Left ventricle myocardium inferior (tissue), 1 donor: ENCODE measurements at regions of chr2 and their contacts with region 1.

Region 1: GRCh38 chr2:65382776-65383357 is 49.5 kb downstream of the SPRED2 start:
- DNase-seq: peak; percentile 77
- H3K4me3 ChIP-seq: peak overlapping the region; percentile 49
- H3K27ac ChIP-seq: peak overlapping the region; percentile 85
- H3K4me1 ChIP-seq: peaks cover 91% of the 10 kb centered on the region
- H3K27me3 ChIP-seq: no peaks in the 10 kb centered on the region
- CTCF ChIP-seq: peak; percentile 26

Region 2: DNA sequence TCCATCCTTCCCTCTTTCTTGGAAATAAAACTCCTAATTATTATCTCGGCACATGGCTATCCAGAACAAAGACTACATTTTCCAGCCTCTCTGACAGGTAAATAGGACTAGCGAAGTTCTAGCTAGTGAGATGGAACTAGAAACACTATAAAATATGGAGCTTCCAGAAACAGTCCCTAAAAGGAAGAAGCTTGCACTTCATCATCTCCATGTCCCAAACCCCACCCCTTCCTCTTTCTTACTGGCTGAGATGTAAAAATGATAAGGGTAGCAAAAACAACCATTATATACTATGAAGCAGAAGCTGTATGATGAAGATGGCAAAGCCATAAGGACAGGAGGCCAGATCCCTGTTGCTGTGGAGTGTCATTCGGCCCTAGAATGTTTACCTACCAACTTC is 166.9 kb before region 1 on chr2:
- intact Hi-C with region 1: no loop called
- DNase-seq: no peak
- H3K4me3 ChIP-seq: no peak overlapping the region
- H3K27ac ChIP-seq: no peak overlapping the region
- H3K4me1 ChIP-seq: no peaks in the 10 kb centered on the region
- H3K27me3 ChIP-seq: no peaks in the 10 kb centered on the region
- CTCF ChIP-seq: no peak

Region 3: GRCh38 chr2:65420712-65421431 is 38.0 kb after region 1 on chr2:
- intact Hi-C with region 1: loop called (anchors 5 kb)
- DNase-seq: no peak
- H3K4me3 ChIP-seq: no peak overlapping the region
- H3K27ac ChIP-seq: peak overlapping the region; percentile 43
- H3K4me1 ChIP-seq: peaks cover 73% of the 10 kb centered on the region
- H3K27me3 ChIP-seq: no peaks in the 10 kb centered on the region
- CTCF ChIP-seq: no peak

Region 4: DNA sequence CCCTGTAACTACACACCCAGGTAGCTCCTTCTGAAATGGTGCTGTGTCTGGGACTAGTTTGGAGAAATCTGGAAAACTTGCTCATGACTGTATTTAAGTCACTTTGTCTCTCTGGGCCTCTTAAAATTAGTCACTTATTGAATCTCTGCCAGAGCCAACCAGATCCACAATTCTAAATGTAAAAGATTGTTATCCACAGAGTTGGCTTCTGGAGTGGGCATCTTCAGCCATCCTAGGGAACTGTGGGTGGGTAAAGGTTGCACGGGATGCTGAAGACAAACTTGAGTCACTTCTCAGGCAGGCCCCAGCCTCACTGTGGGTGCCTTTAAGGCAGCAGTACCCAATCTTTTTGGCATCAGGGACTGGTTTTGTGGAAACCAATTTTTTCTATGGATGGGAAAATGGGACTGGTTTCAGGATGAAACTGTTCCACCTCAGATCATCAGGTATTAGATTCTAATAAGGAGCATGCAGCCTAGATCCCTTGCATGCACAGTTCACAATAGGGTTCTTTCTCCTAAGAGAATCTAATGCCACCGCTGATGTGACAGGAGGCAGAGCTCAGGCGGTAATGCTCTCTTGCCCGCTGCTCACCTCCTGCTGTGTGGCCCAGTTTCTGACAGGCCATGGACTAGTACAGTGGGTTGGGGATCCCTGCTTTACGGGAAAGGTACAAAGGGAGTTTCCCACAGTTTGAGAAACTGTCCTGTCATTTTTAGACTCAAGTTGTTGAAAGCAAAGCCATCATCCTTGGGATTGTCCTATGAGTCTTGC is 147.9 kb after region 1 on chr2:
- intact Hi-C with region 1: no loop called
- DNase-seq: no peak
- H3K4me3 ChIP-seq: no peak overlapping the region
- H3K27ac ChIP-seq: no peak overlapping the region
- H3K4me1 ChIP-seq: no peaks in the 10 kb centered on the region
- H3K27me3 ChIP-seq: peaks cover 10% of the 10 kb centered on the region
- CTCF ChIP-seq: no peak